ENCODE measurements at regions of chr7 and their contacts with region 1.

Region 1: DNA sequence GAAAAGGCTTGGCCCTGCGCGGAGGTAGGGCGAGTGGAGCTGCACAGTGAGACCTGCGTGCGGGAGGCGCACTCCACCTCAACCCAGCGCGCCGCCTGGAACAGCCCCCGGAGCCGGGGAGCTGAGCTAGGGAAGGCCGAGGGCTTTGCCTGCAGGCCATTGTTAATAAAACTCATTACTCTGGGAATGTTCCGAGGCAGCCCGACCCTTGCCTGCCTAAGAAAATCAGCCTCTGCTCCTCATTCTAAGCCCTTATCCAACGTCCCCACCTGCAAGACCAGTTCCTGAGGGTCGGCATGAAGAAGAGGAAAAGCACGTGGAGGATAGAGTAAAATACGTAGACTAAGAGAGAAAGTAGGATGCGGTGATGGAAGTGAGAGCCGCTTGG is 55.3 kb downstream of the C7orf25 start:
- DNase-seq: no peak
- H3K4me3 ChIP-seq: peak overlapping the region in 2 of 3 experiments; percentile 21 to 44
- H3K27ac ChIP-seq: no peak overlapping the region
- H3K4me1 ChIP-seq: peaks cover 18% of the 10 kb centered on the region
- H3K27me3 ChIP-seq: no peaks in the 10 kb centered on the region
- CTCF ChIP-seq: no peak

Region 2: DNA sequence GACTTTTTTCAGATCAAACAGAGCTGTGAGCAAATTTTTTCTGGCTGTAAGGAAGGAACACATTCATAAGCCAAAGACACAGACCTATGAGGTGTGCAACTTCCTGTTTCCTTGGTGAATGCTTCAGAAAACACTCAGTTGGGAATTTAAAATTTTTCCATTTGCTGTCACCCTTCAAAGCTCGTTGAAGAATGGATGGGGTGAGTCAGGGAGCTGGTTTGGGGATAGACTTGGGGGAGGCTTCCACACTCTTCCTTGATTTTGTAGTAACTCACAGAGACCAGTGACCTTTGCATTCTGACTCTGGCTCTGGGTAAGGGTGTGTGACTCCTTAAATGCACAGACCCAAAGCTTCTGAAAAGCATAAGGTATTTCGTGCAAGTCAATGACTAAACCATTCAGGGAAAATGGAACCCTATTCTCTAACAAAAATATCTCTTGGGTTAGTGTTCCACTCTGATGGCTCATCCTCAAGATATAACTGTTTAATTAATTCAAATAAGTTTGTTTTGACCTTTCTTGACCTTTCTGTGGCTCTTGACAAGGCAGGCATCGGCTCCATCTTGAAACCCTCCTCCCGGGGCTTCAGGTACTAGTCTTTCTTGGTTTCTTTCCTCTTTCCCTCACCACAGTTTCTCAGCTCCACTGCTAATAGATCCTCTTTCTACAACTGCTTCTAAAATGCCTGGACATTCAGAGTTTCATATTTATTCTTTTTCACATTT is 925.9 kb before region 1 on chr7:
- CTCF ChIA-PET with region 1: no interaction called
- dilution Hi-C with region 1: loop called (anchors 10 kb)
- in situ Hi-C with region 1: no loop called
- intact Hi-C with region 1: no loop called
- DNase-seq: peak; percentile 48
- H3K4me3 ChIP-seq: no peak overlapping the region
- H3K27ac ChIP-seq: no peak overlapping the region
- H3K4me1 ChIP-seq: peaks cover 5% of the 10 kb centered on the region
- H3K27me3 ChIP-seq: no peaks in the 10 kb centered on the region
- CTCF ChIP-seq: no peak

Region 3: DNA sequence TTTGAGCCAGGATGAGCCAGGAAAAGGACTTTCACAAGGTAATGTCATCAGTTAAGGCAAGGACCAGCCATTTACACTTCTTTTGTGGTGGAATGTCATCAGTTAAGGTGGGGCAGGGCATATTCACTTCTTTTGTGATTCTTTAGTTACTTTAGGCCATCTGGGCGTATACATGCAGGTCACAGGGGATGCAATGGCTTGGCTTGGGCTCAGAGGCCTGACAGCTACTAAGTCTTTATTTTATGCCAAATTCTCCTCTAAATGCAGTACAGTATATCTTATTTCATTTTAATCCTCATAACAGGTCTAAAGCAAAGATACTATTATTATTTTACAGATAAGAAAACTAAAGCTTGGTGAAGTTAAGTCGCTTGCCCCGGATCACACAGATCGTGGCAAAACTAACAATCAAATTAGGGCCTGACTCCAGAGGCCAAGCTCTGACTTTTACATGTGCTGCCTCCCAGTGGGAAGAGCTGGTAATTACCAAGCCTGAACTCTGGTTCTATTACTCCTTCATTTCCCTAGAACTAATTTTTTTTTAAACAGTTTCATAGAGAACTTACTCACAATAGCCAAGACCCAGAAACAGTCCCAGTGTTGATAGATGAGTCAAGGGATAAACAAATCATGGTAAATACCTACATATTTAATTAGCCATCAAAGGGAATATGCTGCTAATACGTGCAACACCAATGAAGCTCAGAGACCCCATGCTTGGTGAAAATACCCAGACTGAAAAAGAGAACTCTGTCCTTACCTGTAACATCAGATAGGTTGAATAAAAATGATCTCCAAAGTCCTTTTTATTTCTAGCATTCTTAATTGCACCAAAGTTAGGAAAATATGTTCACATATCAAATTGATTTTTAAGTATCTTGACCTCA is 19.8 kb after region 1 on chr7:
- CTCF ChIA-PET with region 1: interaction called, 13 read pairs
- dilution Hi-C with region 1: no loop called
- in situ Hi-C with region 1: no loop called
- intact Hi-C with region 1: no loop called
- DNase-seq: peak; percentile 40
- H3K4me3 ChIP-seq: no peak overlapping the region
- H3K27ac ChIP-seq: no peak overlapping the region
- H3K4me1 ChIP-seq: no peaks in the 10 kb centered on the region
- H3K27me3 ChIP-seq: no peaks in the 10 kb centered on the region
- CTCF ChIP-seq: peak; percentile 77 to 84

Region 4: GRCh38 chr7:42886129-42886528 is 29.5 kb after region 1 on chr7:
- CTCF ChIA-PET with region 1: no interaction called
- dilution Hi-C with region 1: no loop called
- in situ Hi-C with region 1: no loop called
- intact Hi-C with region 1: loop called (anchors 1 kb)
- DNase-seq: peak; percentile 14
- H3K4me3 ChIP-seq: no peak overlapping the region
- H3K27ac ChIP-seq: no peak overlapping the region
- H3K4me1 ChIP-seq: peaks cover 22% of the 10 kb centered on the region
- H3K27me3 ChIP-seq: no peaks in the 10 kb centered on the region
- CTCF ChIP-seq: peak; percentile 40 to 41

Measured in mammary epithelial cell (primary cell).